Aorta (tissue), 5 donors: ENCODE measurements at regions of chr13 and their contacts with region 1.

Region 1: DNA sequence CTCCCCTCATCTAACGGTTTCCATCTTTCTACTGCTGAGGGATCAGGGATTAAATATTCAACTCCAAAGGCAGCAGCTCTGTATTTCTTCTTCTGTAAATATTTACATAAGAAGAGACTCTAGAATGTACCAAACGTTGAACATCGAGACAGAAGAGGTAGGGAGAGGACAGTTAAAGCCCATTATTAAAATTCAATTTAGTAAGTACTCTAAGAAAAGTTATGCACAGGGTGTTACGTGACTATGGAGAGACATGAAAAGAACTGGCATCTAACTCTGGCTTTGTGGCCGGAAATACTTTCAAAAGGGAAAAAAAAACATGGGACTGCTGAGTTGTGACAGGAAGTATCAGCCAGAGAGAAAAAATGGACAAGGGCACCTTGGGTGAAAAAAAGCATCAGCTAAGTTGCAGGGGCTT is 36.7 kb downstream of the LNX2 start:
- DNase-seq: no peak
- ATAC-seq: no peak
- H3K4me3 ChIP-seq: no peak overlapping the region
- H3K27ac ChIP-seq: no peak overlapping the region
- H3K4me1 ChIP-seq: peaks cover 2 to 4% of the 10 kb centered on the region in 2 donors
- H3K27me3 ChIP-seq: no peaks in the 10 kb centered on the region

Region 2: DNA sequence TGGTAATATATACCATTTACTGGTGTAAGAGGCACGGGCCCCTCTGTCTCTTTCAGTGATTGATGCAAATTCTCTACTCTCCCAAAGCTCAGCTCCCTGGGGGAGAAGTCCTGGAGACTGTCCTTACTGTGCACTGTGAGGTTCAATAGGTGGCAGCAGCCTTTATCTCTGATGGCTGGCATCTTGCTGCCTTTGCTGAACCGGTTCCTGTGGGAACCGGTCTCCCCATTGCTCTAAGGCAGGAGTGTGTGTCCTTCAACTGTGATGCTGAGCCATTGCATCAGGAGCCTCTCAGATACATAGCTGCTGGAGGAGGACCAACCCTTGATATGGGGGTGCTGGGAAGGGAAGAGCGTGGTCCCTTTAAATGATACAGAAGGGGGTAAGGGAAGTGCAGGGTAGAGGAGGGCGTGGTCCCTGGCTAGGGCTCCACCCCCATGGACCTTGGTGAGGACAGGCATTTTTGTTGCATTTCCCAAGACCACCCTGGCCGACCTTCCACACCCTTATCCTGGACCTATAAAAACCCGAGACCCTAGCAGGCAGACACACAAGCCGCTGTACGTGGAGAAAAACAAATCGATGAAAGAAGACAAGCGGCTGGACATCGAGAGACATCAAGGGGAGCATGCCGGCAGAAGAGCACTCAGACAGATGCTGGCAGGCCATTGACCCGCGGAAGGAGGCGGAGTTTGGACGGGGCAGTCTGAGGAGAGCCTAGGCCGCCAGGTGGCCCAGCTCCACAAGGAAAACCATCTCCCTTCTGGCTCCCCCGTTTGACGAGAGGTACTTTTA is 200.3 kb before region 1 on chr13:
- intact Hi-C with region 1: no loop called
- DNase-seq: no peak
- ATAC-seq: no peak
- H3K4me3 ChIP-seq: no peak overlapping the region
- H3K27ac ChIP-seq: no peak overlapping the region
- H3K4me1 ChIP-seq: no peaks in the 10 kb centered on the region
- H3K27me3 ChIP-seq: no peaks in the 10 kb centered on the region

Region 3: GRCh38 chr13:27607125-27607524 is 23.5 kb after region 1 on chr13:
- intact Hi-C with region 1: loop called in 1 of 2 experiments (anchors 2 kb)
- DNase-seq: no peak
- ATAC-seq: no peak
- H3K4me3 ChIP-seq: no peak overlapping the region
- H3K27ac ChIP-seq: no peak overlapping the region
- H3K4me1 ChIP-seq: peaks cover 0 to 10% of the 10 kb centered on the region in 2 donors
- H3K27me3 ChIP-seq: no peaks in the 10 kb centered on the region

Region 4: GRCh38 chr13:27620377-27621115 is 36.9 kb after region 1 on chr13 and contains the start of gene LNX2:
- intact Hi-C with region 1: loop called in 1 of 2 experiments (anchors 2 kb)
- DNase-seq: peak; percentile 99
- ATAC-seq: peak; percentile 98
- H3K4me3 ChIP-seq: peak within 1 kb of the TSS; percentile 82 to 99
- H3K27ac ChIP-seq: peak within 1 kb of the TSS; percentile 43 to 99
- H3K4me1 ChIP-seq: peaks cover 0 to 4% of the 10 kb centered on the region in 2 donors
- H3K27me3 ChIP-seq: no peaks in the 10 kb centered on the region
- total RNA-seq, gene LNX2: 9.5 to 10.3 TPM